ENCODE measurements at regions of chr10 and their contacts with region 1.

Region 1: DNA sequence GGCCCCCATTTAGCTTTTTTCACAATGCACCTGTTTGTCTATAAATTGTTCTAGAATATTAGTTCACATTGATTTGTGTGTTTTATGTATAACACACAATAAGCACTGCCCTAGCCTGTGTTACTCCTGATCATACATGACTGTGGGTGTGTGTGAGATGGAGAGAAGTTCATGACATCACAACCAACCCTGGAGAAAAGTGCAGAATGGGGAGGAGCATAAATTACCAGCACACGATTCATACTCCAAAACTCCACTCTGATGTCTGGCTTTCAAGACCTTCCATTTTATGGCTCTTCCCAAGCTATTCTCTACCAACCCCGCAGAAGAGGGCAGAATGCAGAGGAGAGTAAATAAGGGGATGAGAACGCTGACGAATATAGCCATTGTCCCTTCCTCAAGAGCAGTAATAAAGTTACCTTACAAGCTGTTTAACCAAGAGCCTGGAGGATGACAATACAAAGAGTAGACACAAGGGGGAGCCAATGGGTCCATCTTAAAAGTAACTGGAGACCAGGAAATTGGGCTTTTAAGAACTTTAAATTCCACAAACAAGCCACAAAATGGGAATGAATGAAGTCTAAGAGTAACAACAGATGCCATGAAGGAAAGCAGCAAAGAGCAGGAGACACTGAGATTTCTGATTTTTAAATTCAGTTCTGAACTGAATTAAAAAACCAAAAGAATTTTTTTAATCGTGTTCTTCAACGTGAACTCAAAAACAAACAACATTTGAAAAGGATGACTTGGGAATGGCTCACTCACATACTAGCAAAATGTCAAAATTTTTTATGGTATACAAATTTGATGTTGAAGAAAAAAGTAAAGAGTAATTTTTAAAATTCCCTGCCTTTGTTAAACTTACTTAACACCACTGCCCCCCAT is 159.6 kb downstream of the PARD3 start:
- DNase-seq: peak; percentile 42
- H3K4me3 ChIP-seq: no peak overlapping the region
- H3K27ac ChIP-seq: no peak overlapping the region
- H3K4me1 ChIP-seq: peaks cover 9% of the 10 kb centered on the region
- H3K27me3 ChIP-seq: no peaks in the 10 kb centered on the region
- CTCF ChIP-seq: peak; percentile 62 to 76

Region 2: GRCh38 chr10:34374356-34375045 is 281.0 kb before region 1 on chr10:
- CTCF ChIA-PET with region 1: interaction called, 11 read pairs
- dilution Hi-C with region 1: no loop called
- in situ Hi-C with region 1: no loop called
- intact Hi-C with region 1: no loop called
- DNase-seq: no peak
- H3K4me3 ChIP-seq: no peak overlapping the region
- H3K27ac ChIP-seq: no peak overlapping the region
- H3K4me1 ChIP-seq: no peaks in the 10 kb centered on the region
- H3K27me3 ChIP-seq: no peaks in the 10 kb centered on the region
- CTCF ChIP-seq: no peak

Region 3: DNA sequence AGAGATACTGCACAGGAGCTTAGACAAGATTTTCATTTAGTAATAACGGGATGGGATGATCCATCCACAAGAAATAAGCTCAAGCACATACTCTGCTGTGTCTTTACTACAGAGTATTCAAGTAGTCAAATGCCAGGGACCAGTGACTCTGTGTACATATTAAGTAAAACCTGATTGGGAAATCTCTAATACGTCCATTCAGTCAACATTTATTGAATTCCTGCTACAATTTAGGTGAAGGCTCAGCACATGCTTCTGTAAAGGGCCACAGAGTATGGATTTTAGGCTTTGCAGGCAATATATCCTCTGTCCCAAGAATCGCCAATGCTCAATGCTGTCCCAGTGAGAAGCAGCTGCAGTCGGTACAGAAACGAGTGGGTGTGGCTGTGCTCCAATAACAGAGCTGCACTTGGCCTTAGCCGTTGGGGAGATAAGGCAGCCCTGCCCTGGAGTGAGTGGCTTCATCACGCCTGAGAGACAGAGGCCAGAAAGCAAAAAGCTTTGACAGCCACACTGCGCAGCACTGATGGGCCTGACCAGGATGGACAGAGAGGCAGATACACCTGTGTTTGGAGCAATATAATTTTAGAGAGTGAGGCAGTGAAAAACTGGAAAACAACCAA is 27.2 kb before region 1 on chr10:
- CTCF ChIA-PET with region 1: no interaction called
- dilution Hi-C with region 1: no loop called
- in situ Hi-C with region 1: no loop called
- intact Hi-C with region 1: no loop called
- DNase-seq: no peak
- H3K4me3 ChIP-seq: no peak overlapping the region
- H3K27ac ChIP-seq: no peak overlapping the region
- H3K4me1 ChIP-seq: no peaks in the 10 kb centered on the region
- H3K27me3 ChIP-seq: no peaks in the 10 kb centered on the region
- CTCF ChIP-seq: no peak

Region 4: GRCh38 chr10:34638412-34639054 is 17.0 kb before region 1 on chr10:
- CTCF ChIA-PET with region 1: no interaction called
- dilution Hi-C with region 1: no loop called
- in situ Hi-C with region 1: no loop called
- intact Hi-C with region 1: no loop called
- DNase-seq: peak; percentile 61
- H3K4me3 ChIP-seq: no peak overlapping the region
- H3K27ac ChIP-seq: no peak overlapping the region
- H3K4me1 ChIP-seq: peaks cover 5% of the 10 kb centered on the region
- H3K27me3 ChIP-seq: no peaks in the 10 kb centered on the region
- CTCF ChIP-seq: peak; percentile 89

Measured in mammary epithelial cell (primary cell).